T-cell (primary cell): ENCODE measurements at regions of chr4 and their contacts with region 1.

Region 1: DNA sequence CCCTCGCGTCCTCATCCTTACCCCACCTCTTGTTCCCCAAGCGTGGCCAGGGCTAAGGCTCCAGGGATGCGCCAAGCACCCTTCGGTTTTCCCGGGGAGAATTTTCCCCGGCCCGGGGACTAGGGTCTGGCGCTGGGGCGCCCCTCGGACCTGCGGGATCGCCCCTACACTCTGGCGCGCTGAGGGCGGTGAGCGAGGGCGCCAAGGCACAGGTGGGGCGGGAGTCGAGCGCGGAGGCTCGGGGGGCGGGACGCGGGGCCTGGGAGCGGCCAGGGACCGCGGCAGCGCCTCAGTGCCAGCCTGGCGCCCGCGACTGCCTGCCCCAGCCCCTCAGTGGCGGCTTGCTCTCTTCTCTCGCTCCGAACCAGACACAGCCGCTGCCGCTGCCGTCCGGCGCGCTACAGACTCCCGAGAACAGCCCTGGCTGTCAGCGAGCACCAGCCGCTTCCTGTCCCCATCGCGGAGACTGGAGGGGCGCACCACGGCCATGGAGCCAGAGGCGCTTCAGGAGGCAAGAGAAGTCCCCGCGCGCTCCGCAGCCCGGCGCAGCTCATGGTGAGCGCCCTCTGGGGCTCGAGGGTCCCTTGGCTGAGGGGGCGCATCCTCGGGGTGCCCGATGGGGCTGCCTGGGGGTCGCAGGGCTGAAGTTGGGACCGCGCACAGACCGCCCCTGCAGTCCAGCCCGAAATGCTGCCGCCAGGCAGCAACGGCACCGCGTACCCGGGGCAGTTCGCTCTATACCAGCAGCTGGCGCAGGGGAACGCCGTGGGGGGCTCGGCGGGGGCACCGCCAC is at the start of gene DRD5:
- DNase-seq: no peak
- ATAC-seq: no peak
- H3K4me3 ChIP-seq: no peak within 1 kb of the TSS
- H3K4me3 Mint-ChIP-seq: no peak within 1 kb of the TSS
- H3K27ac ChIP-seq: no peak within 1 kb of the TSS
- H3K27ac Mint-ChIP-seq: no peak within 1 kb of the TSS
- H3K4me1 ChIP-seq: no peaks in the 10 kb centered on the region
- H3K4me1 Mint-ChIP-seq: no peaks in the 10 kb centered on the region
- H3K27me3 ChIP-seq: peaks cover 3 to 31% of the 10 kb centered on the region in 2 experiments
- H3K27me3 Mint-ChIP-seq: peaks cover 48 to 50% of the 10 kb centered on the region in 2 donors
- total RNA-seq, gene DRD5: not detected

Region 2: DNA sequence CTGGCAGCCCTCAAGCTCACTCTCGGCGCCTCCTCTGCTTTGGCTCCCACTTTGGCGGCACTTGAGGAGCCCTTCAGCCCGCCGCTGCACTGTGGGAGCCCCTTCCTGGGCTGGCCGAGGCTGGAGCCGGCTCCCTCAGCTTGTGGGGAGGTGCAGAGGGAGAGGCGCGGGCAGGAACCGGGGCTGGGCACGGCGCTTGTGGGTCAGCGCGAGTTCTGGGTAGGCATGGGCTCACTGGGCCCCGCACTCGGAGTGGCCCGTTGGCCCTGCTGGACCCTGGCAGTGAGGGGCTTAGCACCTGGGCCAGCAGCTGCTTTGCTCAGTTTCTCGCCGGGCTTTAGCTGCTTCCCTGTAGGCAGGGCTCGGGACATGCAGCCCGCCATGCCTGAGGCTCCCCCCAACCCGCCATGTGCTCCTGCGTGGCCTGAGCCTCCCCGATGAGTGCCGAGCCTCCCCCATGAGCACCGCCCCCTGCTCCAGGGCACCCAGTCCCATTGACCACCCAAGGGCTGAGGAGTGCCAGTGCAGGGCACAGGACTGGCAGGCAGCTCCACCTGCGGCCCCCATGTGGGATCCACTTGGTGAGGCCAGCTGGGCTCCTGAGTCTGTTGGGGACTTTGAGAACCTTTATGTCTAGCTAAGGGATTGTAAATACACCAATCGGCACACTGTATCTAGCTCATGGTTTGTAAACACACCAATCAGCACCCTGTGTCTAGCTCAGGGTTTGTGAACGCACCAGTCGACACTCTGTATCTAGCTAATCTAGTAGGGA is 101.6 kb before region 1 on chr4:
- CTCF ChIA-PET with region 1: no interaction called
- POLR2A ChIA-PET with region 1: no interaction called
- DNase-seq: no peak
- ATAC-seq: no peak
- H3K4me3 ChIP-seq: no peak overlapping the region
- H3K4me3 Mint-ChIP-seq: no peak overlapping the region
- H3K27ac ChIP-seq: no peak overlapping the region
- H3K27ac Mint-ChIP-seq: no peak overlapping the region
- H3K4me1 ChIP-seq: no peaks in the 10 kb centered on the region
- H3K4me1 Mint-ChIP-seq: no peaks in the 10 kb centered on the region
- H3K27me3 ChIP-seq: peaks cover 0 to under 1% of the 10 kb centered on the region in 2 experiments
- H3K27me3 Mint-ChIP-seq: peaks cover 0 to 2% of the 10 kb centered on the region in 2 donors

Region 3: GRCh38 chr4:9792381-9792780 is 10.8 kb after region 1 on chr4:
- CTCF ChIA-PET with region 1: interaction called in 1 of 2 experiments, 13 read pairs
- POLR2A ChIA-PET with region 1: no interaction called
- DNase-seq: no peak
- ATAC-seq: no peak
- H3K4me3 ChIP-seq: no peak overlapping the region
- H3K4me3 Mint-ChIP-seq: no peak overlapping the region
- H3K27ac ChIP-seq: no peak overlapping the region
- H3K27ac Mint-ChIP-seq: no peak overlapping the region
- H3K4me1 ChIP-seq: no peaks in the 10 kb centered on the region
- H3K4me1 Mint-ChIP-seq: no peaks in the 10 kb centered on the region
- H3K27me3 ChIP-seq: peaks cover 0 to 2% of the 10 kb centered on the region in 2 experiments
- H3K27me3 Mint-ChIP-seq: peaks cover 2 to 19% of the 10 kb centered on the region in 2 donors

Region 4: GRCh38 chr4:9880406-9881197 is 99.1 kb after region 1 on chr4:
- CTCF ChIA-PET with region 1: no interaction called
- POLR2A ChIA-PET with region 1: no interaction called
- DNase-seq: no peak
- ATAC-seq: no peak
- H3K4me3 ChIP-seq: no peak overlapping the region
- H3K4me3 Mint-ChIP-seq: no peak overlapping the region
- H3K27ac ChIP-seq: no peak overlapping the region
- H3K27ac Mint-ChIP-seq: no peak overlapping the region
- H3K4me1 ChIP-seq: no peaks in the 10 kb centered on the region
- H3K4me1 Mint-ChIP-seq: no peaks in the 10 kb centered on the region
- H3K27me3 ChIP-seq: peaks cover 0 to 9% of the 10 kb centered on the region in 2 experiments
- H3K27me3 Mint-ChIP-seq: peaks cover 0 to 4% of the 10 kb centered on the region in 2 donors